Naive thymus-derived CD4-positive, alpha-beta T cell (primary cell): ENCODE measurements at regions of chr7 and their contacts with region 1.

Region 1: GRCh38 chr7:45259966-45260646 is 102.5 kb downstream of the RAMP3 start:
- DNase-seq: peak; percentile 30 to 80 (median 57)
- ATAC-seq: peak; percentile 82
- H3K4me3 ChIP-seq: no peak overlapping the region
- H3K4me3 Mint-ChIP-seq: no peak overlapping the region
- H3K27ac ChIP-seq: no peak overlapping the region
- H3K27ac Mint-ChIP-seq: no peak overlapping the region
- H3K4me1 ChIP-seq: no peaks in the 10 kb centered on the region
- H3K4me1 Mint-ChIP-seq: peaks cover 0 to 4% (median 0%) of the 10 kb centered on the region in 7 donors
- H3K27me3 ChIP-seq: no peaks in the 10 kb centered on the region
- H3K27me3 Mint-ChIP-seq: peaks cover 10 to 26% (median 20%) of the 10 kb centered on the region in 5 donors

Region 2: DNA sequence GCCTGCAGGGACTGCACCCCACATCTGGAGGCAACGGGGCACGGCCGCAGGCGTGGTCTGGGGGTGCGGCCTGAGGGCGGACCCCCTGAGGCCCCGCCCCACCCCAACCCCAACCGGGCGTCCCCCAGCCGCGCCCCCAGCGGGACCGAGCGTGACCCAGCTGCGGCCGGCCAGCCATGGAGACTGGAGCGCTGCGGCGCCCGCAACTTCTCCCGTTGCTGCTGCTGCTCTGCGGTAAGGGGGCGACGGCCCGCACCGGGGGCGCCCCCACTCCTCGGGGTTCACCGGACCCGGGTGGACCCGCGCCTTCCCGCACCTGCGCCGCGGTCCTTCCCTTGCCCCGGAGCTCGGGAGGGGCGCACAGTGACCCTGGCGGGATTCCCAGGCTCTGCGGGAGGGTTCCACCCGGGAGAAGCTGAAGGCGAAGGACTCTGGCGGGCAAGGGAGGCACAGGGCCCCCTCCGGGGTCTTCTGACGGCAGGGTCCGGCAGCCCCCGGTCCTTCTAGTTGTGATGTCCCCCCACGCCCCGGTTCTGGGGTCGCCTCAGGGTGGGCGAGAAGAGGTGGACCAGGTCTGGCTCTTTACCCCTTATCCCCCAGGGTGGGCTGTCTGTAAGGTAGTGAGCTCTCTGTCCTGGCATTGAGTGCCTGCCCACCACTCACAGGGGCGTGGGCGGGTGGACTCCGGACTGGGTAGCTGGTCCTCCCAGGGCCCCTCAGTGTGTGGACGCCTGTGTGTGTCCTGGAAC is 102.3 kb before region 1 on chr7 and contains the start of gene RAMP3:
- CTCF ChIA-PET with region 1: interaction called, 7 read pairs
- POLR2A ChIA-PET with region 1: no interaction called
- intact Hi-C with region 1: loop called in 1 of 2 experiments (anchors 1 kb)
- DNase-seq: no peak
- ATAC-seq: no peak
- H3K4me3 ChIP-seq: no peak within 1 kb of the TSS
- H3K4me3 Mint-ChIP-seq: peak within 1 kb of the TSS in 5 of 10 donors; percentile 11 to 73 (median 40)
- H3K27ac ChIP-seq: no peak within 1 kb of the TSS
- H3K27ac Mint-ChIP-seq: peak within 1 kb of the TSS in 1 of 9 donors; percentile 10
- H3K4me1 ChIP-seq: no peaks in the 10 kb centered on the region
- H3K4me1 Mint-ChIP-seq: peaks cover 0 to 16% (median 8%) of the 10 kb centered on the region in 7 donors
- H3K27me3 ChIP-seq: no peaks in the 10 kb centered on the region
- H3K27me3 Mint-ChIP-seq: peaks cover 20 to 35% (median 27%) of the 10 kb centered on the region in 5 donors
- total RNA-seq, gene RAMP3: 0.39 TPM in 1 of 5 experiments, not detected in the others

Region 3: GRCh38 chr7:45278763-45279398 is 18.8 kb after region 1 on chr7:
- CTCF ChIA-PET with region 1: no interaction called
- POLR2A ChIA-PET with region 1: no interaction called
- intact Hi-C with region 1: no loop called
- DNase-seq: no peak
- ATAC-seq: no peak
- H3K4me3 ChIP-seq: no peak overlapping the region
- H3K4me3 Mint-ChIP-seq: no peak overlapping the region
- H3K27ac ChIP-seq: no peak overlapping the region
- H3K27ac Mint-ChIP-seq: no peak overlapping the region
- H3K4me1 ChIP-seq: no peaks in the 10 kb centered on the region
- H3K4me1 Mint-ChIP-seq: no peaks in the 10 kb centered on the region
- H3K27me3 ChIP-seq: peaks cover 0 to 5% of the 10 kb centered on the region in 2 donors
- H3K27me3 Mint-ChIP-seq: peaks cover 21 to 57% (median 31%) of the 10 kb centered on the region in 5 donors